Mammary epithelial cell (primary cell): ENCODE measurements at regions of chr3 and their contacts with region 1.

Region 1: DNA sequence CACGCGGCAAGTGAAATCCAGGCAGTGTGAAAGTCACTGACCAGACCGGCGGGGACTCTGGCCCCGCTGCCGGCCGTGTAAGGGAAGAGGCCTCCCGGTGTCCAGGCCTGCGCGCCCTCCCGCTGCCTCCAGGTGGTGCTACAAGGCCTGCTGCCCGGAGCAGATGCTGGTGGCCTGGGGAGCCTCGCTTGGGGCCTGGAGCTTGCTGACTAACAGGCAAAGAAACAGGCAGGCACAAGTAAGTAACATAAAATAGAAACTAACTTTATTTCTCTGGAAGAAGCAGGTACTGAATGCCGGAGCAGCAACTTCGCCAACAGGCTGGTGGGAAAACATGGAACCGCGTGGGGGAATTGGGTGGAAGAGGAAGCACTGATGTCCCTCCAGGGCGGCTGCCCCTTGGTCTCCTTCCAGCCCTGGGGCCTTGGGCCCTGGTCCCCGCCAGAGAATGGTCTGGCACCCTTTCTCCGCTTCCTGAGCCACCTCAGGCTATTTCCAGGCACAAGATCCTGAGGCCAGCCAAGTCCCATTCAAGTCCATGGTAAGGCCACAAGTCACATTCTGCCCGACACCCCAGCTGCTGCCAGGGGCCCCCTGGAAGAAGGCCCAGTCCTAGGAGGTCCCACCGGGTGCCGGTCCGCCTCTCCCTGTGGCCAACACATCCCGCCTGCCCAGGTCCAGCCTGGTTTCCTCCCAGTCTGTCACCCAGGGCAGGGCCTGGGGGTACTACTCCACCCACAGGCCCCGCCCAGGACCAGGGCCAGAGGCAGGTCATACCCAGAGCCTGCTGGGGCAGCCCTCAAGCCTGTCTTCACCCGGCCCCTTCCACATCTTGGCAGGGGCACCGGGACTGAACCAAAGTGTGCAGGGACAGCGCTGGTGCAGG is 45.0 kb downstream of the TNK2 start:
- DNase-seq: peak; percentile 87
- H3K4me3 ChIP-seq: no peak overlapping the region
- H3K27ac ChIP-seq: peak overlapping the region; percentile 38
- H3K4me1 ChIP-seq: peaks cover 32% of the 10 kb centered on the region
- H3K27me3 ChIP-seq: no peaks in the 10 kb centered on the region
- CTCF ChIP-seq: peak; percentile 91 to 98

Region 2: DNA sequence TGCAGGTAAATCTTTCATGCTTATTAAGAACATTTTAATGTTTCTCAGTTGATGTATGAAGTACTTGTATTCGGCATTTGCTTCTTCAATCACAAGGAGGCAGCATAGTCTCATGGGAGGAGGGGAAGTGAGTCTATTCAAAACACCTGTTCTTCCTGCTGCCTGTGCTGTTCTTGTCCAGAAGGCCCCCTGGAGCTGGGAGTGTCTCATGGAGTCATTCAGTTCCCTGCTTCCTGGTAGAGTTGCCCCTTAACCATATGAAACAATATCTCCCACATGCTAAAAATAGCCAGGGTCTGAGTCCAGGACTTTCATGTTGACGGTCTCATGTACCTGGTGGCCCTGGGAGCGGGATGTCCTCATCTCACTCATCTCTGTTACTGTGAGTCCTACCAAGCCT is 304.8 kb before region 1 on chr3:
- CTCF ChIA-PET with region 1: no interaction called
- dilution Hi-C with region 1: no loop called
- in situ Hi-C with region 1: no loop called
- intact Hi-C with region 1: loop called (anchors 2 kb)
- DNase-seq: peak; percentile 38
- H3K4me3 ChIP-seq: no peak overlapping the region
- H3K27ac ChIP-seq: no peak overlapping the region
- H3K4me1 ChIP-seq: peaks cover 6% of the 10 kb centered on the region
- H3K27me3 ChIP-seq: no peaks in the 10 kb centered on the region
- CTCF ChIP-seq: peak; percentile 38 to 66

Region 3: GRCh38 chr3:195914648-195915473 is 51.5 kb after region 1 on chr3:
- CTCF ChIA-PET with region 1: interaction called, 8 read pairs
- dilution Hi-C with region 1: no loop called
- in situ Hi-C with region 1: no loop called
- intact Hi-C with region 1: loop called (anchors 1 kb)
- DNase-seq: peak; percentile 100
- H3K4me3 ChIP-seq: peak overlapping the region in 1 of 3 experiments; percentile 16
- H3K27ac ChIP-seq: peak overlapping the region; percentile 59
- H3K4me1 ChIP-seq: peaks cover 56% of the 10 kb centered on the region
- H3K27me3 ChIP-seq: no peaks in the 10 kb centered on the region
- CTCF ChIP-seq: peak; percentile 87 to 98

Region 4: GRCh38 chr3:196055683-196056270 is 192.4 kb after region 1 on chr3:
- CTCF ChIA-PET with region 1: no interaction called
- dilution Hi-C with region 1: no loop called
- in situ Hi-C with region 1: no loop called
- intact Hi-C with region 1: no loop called
- DNase-seq: no peak
- H3K4me3 ChIP-seq: no peak overlapping the region
- H3K27ac ChIP-seq: no peak overlapping the region
- H3K4me1 ChIP-seq: no peaks in the 10 kb centered on the region
- H3K27me3 ChIP-seq: no peaks in the 10 kb centered on the region
- CTCF ChIP-seq: no peak